ENCODE measurements at regions of chr5 and their contacts with region 1.

Region 1: DNA sequence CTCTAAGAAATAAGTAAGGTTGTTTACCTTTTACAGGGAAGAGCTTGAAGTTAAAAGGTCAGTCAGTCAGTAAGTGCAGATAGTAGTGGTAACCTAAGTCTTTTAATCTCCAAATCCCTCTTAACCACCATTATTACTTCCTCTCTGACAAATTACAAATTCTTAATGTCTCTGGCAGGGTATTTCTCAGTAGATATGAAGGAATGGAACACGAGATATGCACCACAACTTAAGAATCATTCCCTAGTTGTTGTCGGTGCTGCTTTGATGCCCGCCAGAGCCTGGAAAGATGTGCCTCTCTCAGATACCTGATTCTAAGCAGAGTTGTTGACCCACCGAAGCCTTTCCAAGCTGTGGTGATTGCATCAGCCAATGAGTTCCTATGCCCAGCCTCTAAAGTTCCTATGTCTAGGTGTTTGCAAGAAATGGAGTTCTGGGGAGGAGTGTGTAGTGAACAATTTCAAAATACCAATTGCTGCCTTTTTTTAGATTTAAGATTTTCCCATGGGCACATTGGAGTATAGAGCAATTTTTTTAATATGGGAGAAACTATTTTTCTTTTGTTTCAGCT is 78.5 kb downstream of the CD180 start:
- DNase-seq: no peak
- H3K4me3 ChIP-seq: no peak overlapping the region
- H3K27ac ChIP-seq: no peak overlapping the region
- H3K4me1 ChIP-seq: no peaks in the 10 kb centered on the region
- H3K27me3 ChIP-seq: no peaks in the 10 kb centered on the region
- CTCF ChIP-seq: no peak

Region 2: GRCh38 chr5:66727630-66728029 is 390.5 kb before region 1 on chr5:
- CTCF ChIA-PET with region 1: no interaction called
- POLR2A ChIA-PET with region 1: no interaction called
- intact Hi-C with region 1: no loop called
- DNase-seq: no peak
- H3K4me3 ChIP-seq: no peak overlapping the region
- H3K27ac ChIP-seq: no peak overlapping the region
- H3K4me1 ChIP-seq: no peaks in the 10 kb centered on the region
- H3K27me3 ChIP-seq: no peaks in the 10 kb centered on the region
- CTCF ChIP-seq: no peak

Region 3: DNA sequence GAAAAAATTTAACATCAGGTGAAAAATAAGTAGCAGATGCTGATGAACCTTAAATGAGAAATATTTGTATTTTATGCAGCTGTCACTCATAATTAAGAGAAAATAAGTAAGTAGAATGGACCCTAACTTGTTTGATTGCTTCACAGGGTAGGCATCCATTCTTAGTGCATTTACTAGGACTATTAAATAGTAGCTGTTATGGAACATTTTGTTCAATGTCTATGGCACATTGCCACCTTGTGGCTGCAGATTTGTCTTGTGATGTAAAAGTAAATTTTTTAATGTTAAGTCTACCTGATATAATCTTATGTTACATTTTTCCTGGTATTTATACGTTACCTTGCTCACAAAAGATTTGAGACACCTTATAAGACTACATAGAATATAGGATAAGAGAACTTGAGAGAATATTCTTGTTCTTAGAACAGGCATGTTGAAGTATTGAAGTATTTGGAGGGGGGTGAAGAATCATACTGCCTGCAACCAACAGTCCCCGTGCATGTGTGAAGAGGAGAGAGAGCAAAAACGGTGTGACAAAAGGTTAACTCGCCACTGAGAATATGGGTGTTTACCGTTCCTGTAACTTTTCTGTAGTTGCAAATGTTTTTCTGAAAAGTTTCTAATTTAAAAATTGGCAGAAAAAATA is 360.8 kb before region 1 on chr5:
- CTCF ChIA-PET with region 1: no interaction called
- POLR2A ChIA-PET with region 1: interaction called, 13 read pairs
- intact Hi-C with region 1: no loop called
- DNase-seq: peak in 1 of 2 experiments; percentile 20
- H3K4me3 ChIP-seq: no peak overlapping the region
- H3K27ac ChIP-seq: no peak overlapping the region
- H3K4me1 ChIP-seq: no peaks in the 10 kb centered on the region
- H3K27me3 ChIP-seq: 0 out of 2 replicates have a peak, but pooled peaks cover 12% of the 10 kb centered on the region
- CTCF ChIP-seq: peak; percentile 67

Region 4: GRCh38 chr5:66912787-66913186 is 205.3 kb before region 1 on chr5:
- CTCF ChIA-PET with region 1: no interaction called
- POLR2A ChIA-PET with region 1: interaction called, 23 read pairs
- intact Hi-C with region 1: no loop called
- DNase-seq: no peak
- H3K4me3 ChIP-seq: no peak overlapping the region
- H3K27ac ChIP-seq: no peak overlapping the region
- H3K4me1 ChIP-seq: no peaks in the 10 kb centered on the region
- H3K27me3 ChIP-seq: no peaks in the 10 kb centered on the region
- CTCF ChIP-seq: no peak

Region 5: GRCh38 chr5:67215583-67216471 is 97.7 kb after region 1 on chr5:
- CTCF ChIA-PET with region 1: no interaction called
- POLR2A ChIA-PET with region 1: no interaction called
- intact Hi-C with region 1: no loop called
- DNase-seq: peak in 1 of 2 experiments; percentile 43
- H3K4me3 ChIP-seq: no peak overlapping the region
- H3K27ac ChIP-seq: no peak overlapping the region
- H3K4me1 ChIP-seq: 0 out of 2 replicates have a peak, but pooled peaks cover 7% of the 10 kb centered on the region
- H3K27me3 ChIP-seq: no peaks in the 10 kb centered on the region
- CTCF ChIP-seq: no peak

Measured in PC-9 (cell line).